Caco-2 (cell line): ENCODE measurements at regions of chr17 and their contacts with region 1.

Region 1: GRCh38 chr17:68777243-68777855 is 176.2 kb upstream of the FAM20A start:
- DNase-seq: peak; percentile 50 to 72
- H3K4me3 ChIP-seq: no peak overlapping the region
- H3K4me3 Mint-ChIP-seq: peak overlapping the region; percentile 62
- H3K27ac Mint-ChIP-seq: peak overlapping the region; percentile 39
- H3K4me1 ChIP-seq: peaks cover 22% of the 10 kb centered on the region
- H3K4me1 Mint-ChIP-seq: peaks cover 6% of the 10 kb centered on the region
- H3K27me3 ChIP-seq: no peaks in the 10 kb centered on the region
- H3K27me3 Mint-ChIP-seq: no peaks in the 10 kb centered on the region
- CTCF ChIP-seq: peak; percentile 73 to 74

Region 2: DNA sequence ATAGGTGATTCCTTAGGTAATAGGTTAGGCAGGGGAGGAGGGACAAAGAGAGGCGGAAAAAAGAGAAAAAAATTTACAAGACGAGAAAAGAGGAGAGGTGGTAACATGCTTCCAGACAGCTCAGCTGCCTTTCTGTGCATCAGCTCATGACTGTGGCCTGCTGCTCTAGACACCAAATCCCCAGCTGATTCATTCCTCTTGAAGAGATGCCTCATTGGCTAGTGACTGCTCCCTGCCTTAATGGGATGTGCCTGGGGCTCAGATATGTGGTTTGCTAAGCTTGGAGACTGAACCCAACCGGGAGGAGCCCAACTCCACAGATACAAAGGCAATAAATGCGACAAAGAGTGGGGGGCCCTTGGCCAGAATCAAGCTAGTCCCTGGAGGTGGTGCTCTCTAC is 70.3 kb before region 1 on chr17:
- CTCF ChIA-PET with region 1: no interaction called
- POLR2A ChIA-PET with region 1: no interaction called
- intact Hi-C with region 1: no loop called
- DNase-seq: no peak
- H3K4me3 ChIP-seq: no peak overlapping the region
- H3K4me3 Mint-ChIP-seq: no peak overlapping the region
- H3K27ac Mint-ChIP-seq: no peak overlapping the region
- H3K4me1 ChIP-seq: peaks cover 8% of the 10 kb centered on the region
- H3K4me1 Mint-ChIP-seq: peaks cover 8% of the 10 kb centered on the region
- H3K27me3 ChIP-seq: no peaks in the 10 kb centered on the region
- H3K27me3 Mint-ChIP-seq: peaks cover 8% of the 10 kb centered on the region
- CTCF ChIP-seq: no peak

Region 3: GRCh38 chr17:68763551-68763950 is 13.8 kb before region 1 on chr17:
- CTCF ChIA-PET with region 1: no interaction called
- POLR2A ChIA-PET with region 1: no interaction called
- intact Hi-C with region 1: no loop called
- DNase-seq: no peak
- H3K4me3 ChIP-seq: no peak overlapping the region
- H3K4me3 Mint-ChIP-seq: no peak overlapping the region
- H3K27ac Mint-ChIP-seq: no peak overlapping the region
- H3K4me1 ChIP-seq: peaks cover 10% of the 10 kb centered on the region
- H3K4me1 Mint-ChIP-seq: peaks cover 7% of the 10 kb centered on the region
- H3K27me3 ChIP-seq: no peaks in the 10 kb centered on the region
- H3K27me3 Mint-ChIP-seq: no peaks in the 10 kb centered on the region
- CTCF ChIP-seq: no peak

Region 4: GRCh38 chr17:68821860-68822696 is 44.7 kb after region 1 on chr17:
- CTCF ChIA-PET with region 1: no interaction called
- POLR2A ChIA-PET with region 1: no interaction called
- intact Hi-C with region 1: loop called (anchors 1 kb)
- DNase-seq: peak; percentile 9 to 39
- H3K4me3 ChIP-seq: no peak overlapping the region
- H3K4me3 Mint-ChIP-seq: peak overlapping the region; percentile 29
- H3K27ac Mint-ChIP-seq: peak overlapping the region; percentile 76
- H3K4me1 ChIP-seq: peaks cover 30% of the 10 kb centered on the region
- H3K4me1 Mint-ChIP-seq: peaks cover 26% of the 10 kb centered on the region
- H3K27me3 ChIP-seq: no peaks in the 10 kb centered on the region
- H3K27me3 Mint-ChIP-seq: no peaks in the 10 kb centered on the region
- CTCF ChIP-seq: no peak

Region 5: GRCh38 chr17:68972119-68972704 is 194.9 kb after region 1 on chr17:
- CTCF ChIA-PET with region 1: no interaction called
- POLR2A ChIA-PET with region 1: no interaction called
- intact Hi-C with region 1: loop called (anchors 1 kb)
- DNase-seq: peak in 1 of 2 experiments; percentile 49
- H3K4me3 ChIP-seq: no peak overlapping the region
- H3K4me3 Mint-ChIP-seq: no peak overlapping the region
- H3K27ac Mint-ChIP-seq: no peak overlapping the region
- H3K4me1 ChIP-seq: no peaks in the 10 kb centered on the region
- H3K4me1 Mint-ChIP-seq: no peaks in the 10 kb centered on the region
- H3K27me3 ChIP-seq: no peaks in the 10 kb centered on the region
- H3K27me3 Mint-ChIP-seq: no peaks in the 10 kb centered on the region
- CTCF ChIP-seq: peak; percentile 60 to 72

Region 6: GRCh38 chr17:69058165-69058564 is 280.8 kb after region 1 on chr17:
- CTCF ChIA-PET with region 1: no interaction called
- POLR2A ChIA-PET with region 1: no interaction called
- intact Hi-C with region 1: loop called (anchors 1 kb)
- DNase-seq: no peak
- H3K4me3 ChIP-seq: no peak overlapping the region
- H3K4me3 Mint-ChIP-seq: no peak overlapping the region
- H3K27ac Mint-ChIP-seq: no peak overlapping the region
- H3K4me1 ChIP-seq: peaks cover 8% of the 10 kb centered on the region
- H3K4me1 Mint-ChIP-seq: peaks cover 8% of the 10 kb centered on the region
- H3K27me3 ChIP-seq: no peaks in the 10 kb centered on the region
- H3K27me3 Mint-ChIP-seq: no peaks in the 10 kb centered on the region
- CTCF ChIP-seq: peak in 1 of 2 experiments; percentile 7

Region 7: DNA sequence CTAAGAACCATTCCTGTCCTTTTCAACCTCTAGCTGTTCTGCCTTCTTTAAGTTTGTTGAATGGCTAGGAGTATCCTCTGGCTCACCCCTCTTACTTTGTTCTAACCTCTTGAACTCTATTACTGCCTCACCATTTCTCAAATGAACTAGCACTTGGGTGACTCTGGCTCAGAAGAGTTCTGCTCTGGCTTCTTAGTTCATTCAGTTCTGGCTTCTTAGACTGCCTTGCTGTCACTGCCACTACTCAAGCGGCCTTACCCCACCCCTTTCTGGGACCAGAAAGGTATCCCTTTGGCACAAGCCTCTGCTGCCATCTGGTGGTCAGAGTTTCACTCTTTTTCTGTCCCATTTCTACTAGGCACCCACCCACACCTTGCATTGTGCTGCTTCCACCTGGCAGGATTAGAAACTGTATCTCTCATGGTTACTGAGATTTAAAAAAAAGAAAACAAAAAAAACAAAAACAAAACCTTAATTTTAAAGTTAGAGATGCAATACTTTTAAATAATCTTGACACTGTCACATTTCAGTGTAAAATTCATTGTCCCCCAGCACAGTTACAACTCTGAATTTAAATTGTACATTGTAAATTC is 458.1 kb after region 1 on chr17:
- CTCF ChIA-PET with region 1: interaction called, 4 read pairs
- POLR2A ChIA-PET with region 1: interaction called, 3 read pairs
- intact Hi-C with region 1: loop called (anchors 1 kb)
- DNase-seq: peak; percentile 89 to 92
- H3K4me3 ChIP-seq: no peak overlapping the region
- H3K4me3 Mint-ChIP-seq: no peak overlapping the region
- H3K27ac Mint-ChIP-seq: no peak overlapping the region
- H3K4me1 ChIP-seq: peaks cover 5% of the 10 kb centered on the region
- H3K4me1 Mint-ChIP-seq: peaks cover 6% of the 10 kb centered on the region
- H3K27me3 ChIP-seq: no peaks in the 10 kb centered on the region
- H3K27me3 Mint-ChIP-seq: no peaks in the 10 kb centered on the region
- CTCF ChIP-seq: peak; percentile 86 to 89